HCT116 (cell line): ENCODE measurements at regions of chr17 and their contacts with region 1.

Region 1: GRCh38 chr17:49508061-49508865 is 13.2 kb downstream of the NGFR start:
- DNase-seq: peak; percentile 52
- ATAC-seq: peak; percentile 78
- H3K4me3 ChIP-seq: peak overlapping the region; percentile 18 to 37
- H3K27ac ChIP-seq: peak overlapping the region; percentile 27; the same call in 1 of the 2 replicates
- H3K4me1 ChIP-seq: peaks cover 21 to 25% of the 10 kb centered on the region in 2 experiments
- H3K27me3 ChIP-seq: no peaks in the 10 kb centered on the region
- CTCF ChIP-seq: no peak
- POLR2A ChIP-seq: no peak
- RAD21 ChIP-seq: no peak

Region 2: DNA sequence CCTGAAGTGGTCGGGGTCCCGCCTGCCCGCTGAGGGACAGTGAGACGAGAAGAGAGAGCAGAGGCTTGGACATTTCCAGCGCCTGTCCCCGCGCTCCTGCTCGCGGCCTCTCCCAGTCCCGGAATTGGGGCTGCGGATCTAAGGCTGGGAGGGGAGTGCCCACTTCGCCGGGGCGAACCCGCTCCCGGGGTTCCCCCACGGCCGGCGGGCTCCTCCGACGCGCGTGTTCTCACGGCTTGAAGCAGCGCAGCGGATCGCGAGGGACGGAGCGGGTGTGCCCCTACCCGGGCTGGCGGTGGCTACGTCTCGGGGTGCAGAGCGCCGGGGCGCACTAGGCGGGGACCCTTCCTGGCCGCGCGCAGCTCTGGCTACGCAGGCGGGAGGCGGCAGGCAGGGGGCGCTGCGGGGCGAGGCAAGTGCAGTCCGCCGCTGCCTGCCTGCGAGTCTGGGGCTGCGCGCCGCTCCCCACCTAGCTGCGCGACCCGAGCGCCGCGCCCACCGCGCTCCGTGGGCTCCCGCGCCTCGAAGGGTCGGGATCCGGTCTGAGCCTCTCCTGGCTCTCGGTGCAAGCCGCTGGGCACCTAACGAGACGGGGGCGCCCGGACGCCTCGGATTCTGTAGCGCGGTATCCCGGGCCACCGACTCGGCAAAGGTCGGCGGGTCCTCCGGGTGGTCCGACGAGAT is 11.9 kb before region 1 on chr17:
- CTCF ChIA-PET with region 1: interaction called, 28 read pairs
- POLR2A ChIA-PET with region 1: interaction called, 9 read pairs
- RAD21 ChIA-PET with region 1: no interaction called
- intact Hi-C with region 1: no loop called
- DNase-seq: no peak
- ATAC-seq: peak; percentile 75
- H3K4me3 ChIP-seq: peak overlapping the region; percentile 53 to 61
- H3K27ac ChIP-seq: no peak overlapping the region
- H3K4me1 ChIP-seq: peaks cover 5 to 25% of the 10 kb centered on the region in 2 experiments; a peak in 3 of 4 replicates
- H3K27me3 ChIP-seq: no peaks in the 10 kb centered on the region
- CTCF ChIP-seq: peak; percentile 40 to 86 (median 74)
- POLR2A ChIP-seq: no peak
- RAD21 ChIP-seq: no peak; the same call in 1 of the 2 replicates

Region 3: DNA sequence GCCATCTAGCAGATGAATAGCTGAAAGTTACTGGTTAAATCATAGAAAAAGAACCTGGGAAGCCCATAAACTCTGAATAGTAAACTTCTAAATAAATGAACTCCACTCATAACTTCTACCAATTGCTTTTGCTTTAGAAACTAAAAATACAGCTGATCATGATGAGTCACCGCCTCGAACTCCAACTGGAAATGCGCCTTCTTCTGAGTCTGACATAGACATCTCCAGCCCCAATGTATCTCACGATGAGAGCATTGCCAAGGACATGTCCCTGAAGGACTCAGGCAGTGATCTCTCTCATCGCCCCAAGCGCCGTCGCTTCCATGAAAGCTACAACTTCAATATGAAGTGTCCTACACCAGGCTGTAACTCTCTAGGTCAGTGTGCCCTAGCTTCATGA is 289.9 kb after region 1 on chr17:
- CTCF ChIA-PET with region 1: no interaction called
- POLR2A ChIA-PET with region 1: no interaction called
- RAD21 ChIA-PET with region 1: no interaction called
- intact Hi-C with region 1: no loop called
- DNase-seq: no peak
- ATAC-seq: no peak
- H3K4me3 ChIP-seq: no peak overlapping the region
- H3K27ac ChIP-seq: no peak overlapping the region
- H3K4me1 ChIP-seq: no peaks in the 10 kb centered on the region
- H3K27me3 ChIP-seq: no peaks in the 10 kb centered on the region
- CTCF ChIP-seq: no peak
- POLR2A ChIP-seq: no peak
- RAD21 ChIP-seq: no peak